ENCODE measurements at regions of chr3 and their contacts with region 1.

Region 1: GRCh38 chr3:112642912-112643506 is 2.1 kb upstream of the CCDC80 start:
- DNase-seq: peak; percentile 54 to 83
- H3K4me3 ChIP-seq: peak overlapping the region in 1 of 4 experiments; percentile 25; a peak in 1 of 8 replicates
- H3K27ac ChIP-seq: no peak overlapping the region
- H3K4me1 ChIP-seq: peaks cover 7 to 22% (median 16%) of the 10 kb centered on the region in 4 experiments; a peak in 6 of 7 replicates
- H3K27me3 ChIP-seq: no peaks in the 10 kb centered on the region
- CTCF ChIP-seq: peak; percentile 80 to 93 (median 87)
- EP300 ChIP-seq: no peak; a peak in 1 of 3 replicates
- POLR2A ChIP-seq: no peak
- RAD21 ChIP-seq: peak; percentile 96 to 98

Region 2: DNA sequence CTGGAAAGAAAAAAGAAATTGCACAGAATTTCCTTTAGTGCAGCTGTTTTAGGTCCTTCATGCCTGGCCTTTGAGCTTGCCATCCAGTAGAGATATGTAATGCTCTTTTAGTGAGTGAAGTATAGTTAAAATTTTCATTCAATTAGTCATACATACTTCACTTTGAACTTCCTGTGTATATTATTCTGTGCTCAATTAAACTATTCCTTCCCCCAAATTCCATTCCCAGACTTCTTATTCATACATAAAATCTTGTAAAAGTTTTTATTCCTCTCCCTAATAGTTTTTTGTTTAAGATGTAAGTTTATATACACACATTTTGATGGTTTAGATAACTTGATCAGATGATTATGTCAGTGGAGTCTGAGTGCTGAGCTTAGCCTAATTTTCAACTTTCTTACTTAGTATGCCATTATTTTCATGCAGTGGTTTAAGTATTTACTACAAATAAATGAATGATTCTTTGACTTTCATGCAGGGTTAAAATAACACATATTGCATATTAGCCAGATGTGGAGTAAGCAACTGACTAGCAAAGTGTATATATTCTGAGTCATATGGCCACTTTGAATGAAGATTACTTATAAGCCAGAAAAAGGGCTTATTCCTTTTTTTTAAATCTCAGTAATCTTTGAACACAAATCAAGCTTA is 706.7 kb before region 1 on chr3:
- CTCF ChIA-PET with region 1: no interaction called
- POLR2A ChIA-PET with region 1: no interaction called
- DNase-seq: no peak
- H3K4me3 ChIP-seq: no peak overlapping the region
- H3K27ac ChIP-seq: no peak overlapping the region
- H3K4me1 ChIP-seq: no peaks in the 10 kb centered on the region
- H3K27me3 ChIP-seq: no peaks in the 10 kb centered on the region
- CTCF ChIP-seq: no peak
- EP300 ChIP-seq: no peak
- POLR2A ChIP-seq: no peak
- RAD21 ChIP-seq: no peak

Region 3: GRCh38 chr3:112555535-112556170 is 87.4 kb before region 1 on chr3:
- CTCF ChIA-PET with region 1: no interaction called
- POLR2A ChIA-PET with region 1: no interaction called
- DNase-seq: no peak
- H3K4me3 ChIP-seq: no peak overlapping the region
- H3K27ac ChIP-seq: no peak overlapping the region
- H3K4me1 ChIP-seq: no peaks in the 10 kb centered on the region
- H3K27me3 ChIP-seq: no peaks in the 10 kb centered on the region
- CTCF ChIP-seq: no peak
- EP300 ChIP-seq: no peak
- POLR2A ChIP-seq: no peak
- RAD21 ChIP-seq: no peak

Region 4: GRCh38 chr3:112653209-112653871 is 10.3 kb after region 1 on chr3:
- CTCF ChIA-PET with region 1: interaction called, 47 read pairs
- POLR2A ChIA-PET with region 1: interaction called, 6 read pairs
- DNase-seq: no peak
- H3K4me3 ChIP-seq: no peak overlapping the region
- H3K27ac ChIP-seq: no peak overlapping the region
- H3K4me1 ChIP-seq: no peaks in the 10 kb centered on the region; a peak in 1 of 7 replicates
- H3K27me3 ChIP-seq: no peaks in the 10 kb centered on the region
- CTCF ChIP-seq: no peak
- EP300 ChIP-seq: no peak
- POLR2A ChIP-seq: no peak
- RAD21 ChIP-seq: no peak

Region 5: GRCh38 chr3:112675943-112676535 is 33.0 kb after region 1 on chr3:
- CTCF ChIA-PET with region 1: no interaction called
- POLR2A ChIA-PET with region 1: no interaction called
- DNase-seq: no peak
- H3K4me3 ChIP-seq: no peak overlapping the region
- H3K27ac ChIP-seq: no peak overlapping the region
- H3K4me1 ChIP-seq: peaks cover 0 to 9% (median 2%) of the 10 kb centered on the region in 4 experiments; a peak in 4 of 7 replicates
- H3K27me3 ChIP-seq: no peaks in the 10 kb centered on the region
- CTCF ChIP-seq: no peak
- EP300 ChIP-seq: no peak
- POLR2A ChIP-seq: no peak
- RAD21 ChIP-seq: no peak

Region 6: GRCh38 chr3:112693186-112693585 is 50.2 kb after region 1 on chr3:
- CTCF ChIA-PET with region 1: interaction called, 30 read pairs
- POLR2A ChIA-PET with region 1: interaction called, 4 read pairs
- DNase-seq: no peak
- H3K4me3 ChIP-seq: no peak overlapping the region
- H3K27ac ChIP-seq: no peak overlapping the region
- H3K4me1 ChIP-seq: peaks cover 0 to 2% (median 0%) of the 10 kb centered on the region in 4 experiments; a peak in 1 of 7 replicates
- H3K27me3 ChIP-seq: no peaks in the 10 kb centered on the region
- CTCF ChIP-seq: no peak
- EP300 ChIP-seq: no peak
- POLR2A ChIP-seq: no peak
- RAD21 ChIP-seq: no peak

Region 7: GRCh38 chr3:112814266-112814665 is 171.3 kb after region 1 on chr3:
- CTCF ChIA-PET with region 1: interaction called, 32 read pairs
- POLR2A ChIA-PET with region 1: interaction called, 7 read pairs
- DNase-seq: no peak
- H3K4me3 ChIP-seq: no peak overlapping the region
- H3K27ac ChIP-seq: no peak overlapping the region
- H3K4me1 ChIP-seq: no peaks in the 10 kb centered on the region
- H3K27me3 ChIP-seq: no peaks in the 10 kb centered on the region
- CTCF ChIP-seq: peak in 2 of 3 experiments; percentile 30 to 42; a peak in 2 of 4 replicates
- EP300 ChIP-seq: no peak
- POLR2A ChIP-seq: no peak
- RAD21 ChIP-seq: peak; percentile 60 to 75

Region 8: GRCh38 chr3:112990672-112991602 is 347.9 kb after region 1 on chr3 and contains the start of gene GTPBP8:
- CTCF ChIA-PET with region 1: interaction called, 11 read pairs
- POLR2A ChIA-PET with region 1: interaction called, 23 read pairs
- DNase-seq: peak; percentile 72 to 89
- H3K4me3 ChIP-seq: peak within 1 kb of the TSS; percentile 78 to 88 (median 84)
- H3K27ac ChIP-seq: peak within 1 kb of the TSS; percentile 99
- H3K4me1 ChIP-seq: 0 out of 7 replicates have a peak, but pooled peaks cover 0 to 3% (median 0%) of the 10 kb centered on the region in 4 experiments
- H3K27me3 ChIP-seq: no peaks in the 10 kb centered on the region; a peak in 1 of 7 replicates
- CTCF ChIP-seq: no peak
- EP300 ChIP-seq: no peak
- POLR2A ChIP-seq: peak; percentile 98
- RAD21 ChIP-seq: no peak; a peak in 1 of 4 replicates
- total RNA-seq, gene GTPBP8: 25.8 and 28.8 TPM in 2 replicates

Measured in H1 (cell line).